HepG2 (cell line): ENCODE measurements at regions of chr9 and their contacts with region 1.

Region 1: GRCh38 chr9:38082446-38083287 is 13.6 kb upstream of the SHB start:
- DNase-seq: no peak
- ATAC-seq: no peak
- H3K4me3 ChIP-seq: no peak overlapping the region
- H3K27ac ChIP-seq: no peak overlapping the region
- H3K4me1 ChIP-seq: peaks cover 21% of the 10 kb centered on the region
- H3K27me3 ChIP-seq: peaks cover 3 to 22% of the 10 kb centered on the region in 2 experiments; a peak in 4 of 5 replicates
- CTCF ChIP-seq: no peak
- EP300 ChIP-seq: no peak
- POLR2A ChIP-seq: no peak
- RAD21 ChIP-seq: no peak

Region 2: DNA sequence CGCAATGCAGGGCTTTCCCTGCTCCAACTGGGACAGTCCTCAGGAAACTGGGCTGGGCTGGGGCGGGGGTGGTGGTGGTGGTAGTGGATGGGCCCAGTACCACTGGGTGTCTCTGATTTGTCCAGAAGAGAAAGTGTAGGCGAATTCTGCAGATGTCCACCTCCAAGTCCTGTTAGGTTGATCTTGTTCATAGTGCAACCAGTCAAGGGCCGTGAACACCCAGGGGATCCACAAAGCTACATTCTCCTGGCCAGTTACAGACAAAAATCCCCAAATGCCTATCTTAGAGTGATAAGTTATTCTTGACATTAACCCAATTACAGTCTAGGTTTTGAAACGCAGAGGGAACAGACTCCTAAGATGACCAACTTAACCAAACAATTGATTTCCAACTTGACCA is 83.8 kb after region 1 on chr9:
- CTCF ChIA-PET with region 1: no interaction called
- POLR2A ChIA-PET with region 1: no interaction called
- in situ Hi-C with region 1: no loop called
- intact Hi-C with region 1: loop called (anchors 1 kb)
- DNase-seq: no peak
- ATAC-seq: no peak
- H3K4me3 ChIP-seq: no peak overlapping the region
- H3K27ac ChIP-seq: no peak overlapping the region
- H3K4me1 ChIP-seq: peaks cover 9% of the 10 kb centered on the region
- H3K27me3 ChIP-seq: peaks cover 0 to 15% of the 10 kb centered on the region in 2 experiments; a peak in 2 of 5 replicates
- CTCF ChIP-seq: no peak
- EP300 ChIP-seq: no peak
- POLR2A ChIP-seq: no peak
- RAD21 ChIP-seq: no peak